Naive thymus-derived CD4-positive, alpha-beta T cell (primary cell): ENCODE measurements at regions of chr2 and their contacts with region 1.

Region 1: DNA sequence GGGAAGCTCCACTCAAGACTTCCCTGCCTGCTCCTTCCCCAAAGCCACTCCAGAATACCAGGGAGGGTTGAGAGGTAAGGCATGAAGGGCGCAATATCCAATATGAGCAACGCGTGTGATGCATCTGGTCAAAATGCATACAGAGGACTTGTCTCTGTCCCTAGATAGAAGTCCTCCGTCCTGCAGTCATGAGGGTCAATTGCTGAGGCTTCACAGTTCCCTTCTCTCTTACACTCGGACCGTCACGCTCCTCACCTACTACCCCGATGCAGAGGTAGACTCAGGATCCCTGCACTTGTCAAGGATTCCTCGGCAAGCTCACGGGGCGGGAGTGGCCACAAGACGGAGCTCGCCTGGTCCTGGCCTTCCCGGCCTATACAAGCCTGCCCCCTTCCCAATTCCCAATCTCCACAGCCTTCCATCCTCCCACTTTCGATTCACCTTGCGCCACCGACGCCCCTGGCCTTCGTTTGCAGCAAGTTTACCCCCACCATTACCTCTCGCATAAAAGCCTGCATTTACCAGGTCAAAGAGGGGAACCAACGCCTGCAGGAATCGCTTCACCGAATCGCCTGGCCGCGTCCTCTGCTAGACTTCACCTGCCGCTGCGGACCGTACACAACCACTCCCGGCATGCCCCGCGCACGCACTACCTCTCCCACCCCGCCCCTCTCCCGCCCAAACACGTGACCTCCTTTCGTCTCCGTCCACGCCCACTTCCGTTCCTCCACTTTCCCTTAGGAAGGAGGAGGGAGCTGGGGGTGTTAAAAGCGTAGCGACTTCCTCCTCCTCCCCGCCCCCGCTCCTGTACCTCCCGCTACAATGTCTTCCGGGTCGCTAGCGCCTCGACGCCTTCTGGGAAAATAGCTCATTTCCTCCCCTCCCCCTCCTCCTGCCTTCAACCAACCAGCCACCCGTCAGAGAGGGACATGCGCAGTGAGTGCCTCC is at the start of gene ORC4:
- DNase-seq: peak; percentile 70 to 98 (median 97)
- ATAC-seq: peak; percentile 94
- H3K4me3 ChIP-seq: peak within 1 kb of the TSS; percentile 89
- H3K4me3 Mint-ChIP-seq: peak within 1 kb of the TSS; percentile 92 to 100 (median 98)
- H3K27ac ChIP-seq: peak within 1 kb of the TSS; percentile 91
- H3K27ac Mint-ChIP-seq: peak within 1 kb of the TSS; percentile 89 to 99 (median 97)
- H3K4me1 ChIP-seq: peaks cover 20 to 36% of the 10 kb centered on the region in 2 donors
- H3K4me1 Mint-ChIP-seq: peaks cover 27 to 84% (median 70%) of the 10 kb centered on the region in 7 donors
- H3K27me3 ChIP-seq: no peaks in the 10 kb centered on the region
- H3K27me3 Mint-ChIP-seq: no peaks in the 10 kb centered on the region
- total RNA-seq, gene ORC4: 34.1 to 63.7 (median 44.8) TPM

Region 2: DNA sequence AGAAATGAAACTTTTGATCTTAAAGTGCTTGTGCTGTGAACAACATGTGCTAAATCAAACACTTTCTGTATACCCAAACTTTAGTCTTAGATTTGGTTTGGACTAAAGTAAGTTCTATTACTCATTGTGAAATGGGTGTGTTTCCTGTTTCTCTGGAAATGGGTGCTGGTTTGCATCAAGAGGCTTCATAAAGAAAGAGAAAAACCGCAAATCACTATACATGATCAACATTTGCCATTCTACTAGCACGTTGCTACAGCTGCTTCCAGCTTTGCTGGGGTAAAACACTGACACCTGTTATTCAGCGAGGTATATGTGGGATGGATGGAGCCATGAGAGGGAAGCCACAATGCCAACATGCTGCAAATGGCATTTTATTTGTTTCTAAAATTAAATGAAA is 722.6 kb before region 1 on chr2:
- CTCF ChIA-PET with region 1: no interaction called
- POLR2A ChIA-PET with region 1: no interaction called
- intact Hi-C with region 1: loop called (anchors 2 to 10 kb)
- DNase-seq: peak in 7 of 9 donors; percentile 13 to 63 (median 32)
- ATAC-seq: peak; percentile 76
- H3K4me3 ChIP-seq: no peak overlapping the region
- H3K4me3 Mint-ChIP-seq: peak overlapping the region in 8 of 10 donors; percentile 9 to 53 (median 38)
- H3K27ac ChIP-seq: no peak overlapping the region
- H3K27ac Mint-ChIP-seq: peak overlapping the region; percentile 53 to 94 (median 85)
- H3K4me1 ChIP-seq: peaks cover 18 to 26% of the 10 kb centered on the region in 2 donors
- H3K4me1 Mint-ChIP-seq: peaks cover 10 to 60% (median 29%) of the 10 kb centered on the region in 7 donors
- H3K27me3 ChIP-seq: no peaks in the 10 kb centered on the region
- H3K27me3 Mint-ChIP-seq: peaks cover 0 to 17% (median 0%) of the 10 kb centered on the region in 5 donors

Region 3: GRCh38 chr2:147925886-147926285 is 94.5 kb before region 1 on chr2:
- CTCF ChIA-PET with region 1: no interaction called
- POLR2A ChIA-PET with region 1: no interaction called
- intact Hi-C with region 1: no loop called
- DNase-seq: peak in 2 of 9 donors; percentile 5 to 7
- ATAC-seq: no peak
- H3K4me3 ChIP-seq: no peak overlapping the region
- H3K4me3 Mint-ChIP-seq: peak overlapping the region in 1 of 10 donors; percentile 19
- H3K27ac ChIP-seq: no peak overlapping the region
- H3K27ac Mint-ChIP-seq: peak overlapping the region in 7 of 9 donors; percentile 26 to 78 (median 66)
- H3K4me1 ChIP-seq: no peaks in the 10 kb centered on the region
- H3K4me1 Mint-ChIP-seq: peaks cover 0 to 36% (median 25%) of the 10 kb centered on the region in 7 donors
- H3K27me3 ChIP-seq: no peaks in the 10 kb centered on the region
- H3K27me3 Mint-ChIP-seq: no peaks in the 10 kb centered on the region

Region 4: GRCh38 chr2:148042219-148042618 is 21.8 kb after region 1 on chr2:
- CTCF ChIA-PET with region 1: interaction called, 6 read pairs
- POLR2A ChIA-PET with region 1: interaction called, 3 read pairs
- intact Hi-C with region 1: loop called in 1 of 2 experiments (anchors 2 kb)
- DNase-seq: no peak
- ATAC-seq: no peak
- H3K4me3 ChIP-seq: no peak overlapping the region
- H3K4me3 Mint-ChIP-seq: no peak overlapping the region
- H3K27ac ChIP-seq: no peak overlapping the region
- H3K27ac Mint-ChIP-seq: no peak overlapping the region
- H3K4me1 ChIP-seq: peaks cover 0 to 4% of the 10 kb centered on the region in 2 donors
- H3K4me1 Mint-ChIP-seq: peaks cover 10 to 36% (median 20%) of the 10 kb centered on the region in 7 donors
- H3K27me3 ChIP-seq: no peaks in the 10 kb centered on the region
- H3K27me3 Mint-ChIP-seq: no peaks in the 10 kb centered on the region

Region 5: DNA sequence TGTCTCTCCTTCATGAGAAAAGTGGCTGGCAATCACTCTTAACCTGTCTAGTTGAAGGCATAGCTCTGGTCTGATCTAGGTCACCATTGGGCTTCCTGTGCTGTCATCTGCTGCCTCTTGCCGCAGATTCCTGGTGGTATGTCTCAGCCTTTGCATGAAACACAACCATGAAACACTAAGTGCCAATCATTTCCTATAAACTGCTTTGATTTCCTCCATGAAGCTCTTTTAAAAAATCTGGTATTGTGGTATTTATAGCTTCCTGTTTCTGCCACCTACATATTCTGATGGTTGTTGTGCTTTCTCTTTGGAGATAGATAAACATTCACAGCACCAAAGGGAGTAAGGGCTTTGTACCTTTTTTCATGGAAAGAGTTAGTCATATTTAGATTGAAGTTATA is 504.1 kb after region 1 on chr2:
- CTCF ChIA-PET with region 1: interaction called, 3 read pairs
- POLR2A ChIA-PET with region 1: interaction called, 9 read pairs
- intact Hi-C with region 1: loop called (anchors 1 kb)
- DNase-seq: peak in 8 of 9 donors; percentile 44 to 93 (median 86)
- ATAC-seq: peak; percentile 94
- H3K4me3 ChIP-seq: peak overlapping the region; percentile 28
- H3K4me3 Mint-ChIP-seq: peak overlapping the region; percentile 56 to 92 (median 76)
- H3K27ac ChIP-seq: peak overlapping the region; percentile 56
- H3K27ac Mint-ChIP-seq: peak overlapping the region; percentile 85 to 98 (median 94)
- H3K4me1 ChIP-seq: peaks cover 46 to 75% of the 10 kb centered on the region in 2 donors
- H3K4me1 Mint-ChIP-seq: peaks cover 58 to 90% (median 88%) of the 10 kb centered on the region in 7 donors
- H3K27me3 ChIP-seq: no peaks in the 10 kb centered on the region
- H3K27me3 Mint-ChIP-seq: no peaks in the 10 kb centered on the region

Region 6: GRCh38 chr2:148730085-148730484 is 709.7 kb after region 1 on chr2:
- CTCF ChIA-PET with region 1: no interaction called
- POLR2A ChIA-PET with region 1: no interaction called
- intact Hi-C with region 1: no loop called
- DNase-seq: no peak
- ATAC-seq: no peak
- H3K4me3 ChIP-seq: no peak overlapping the region
- H3K4me3 Mint-ChIP-seq: peak overlapping the region in 1 of 10 donors; percentile 10
- H3K27ac ChIP-seq: no peak overlapping the region
- H3K27ac Mint-ChIP-seq: peak overlapping the region in 2 of 9 donors; percentile 11 to 25
- H3K4me1 ChIP-seq: peaks cover 0 to 4% of the 10 kb centered on the region in 2 donors
- H3K4me1 Mint-ChIP-seq: peaks cover 18 to 79% (median 54%) of the 10 kb centered on the region in 7 donors
- H3K27me3 ChIP-seq: no peaks in the 10 kb centered on the region
- H3K27me3 Mint-ChIP-seq: no peaks in the 10 kb centered on the region

Region 7: DNA sequence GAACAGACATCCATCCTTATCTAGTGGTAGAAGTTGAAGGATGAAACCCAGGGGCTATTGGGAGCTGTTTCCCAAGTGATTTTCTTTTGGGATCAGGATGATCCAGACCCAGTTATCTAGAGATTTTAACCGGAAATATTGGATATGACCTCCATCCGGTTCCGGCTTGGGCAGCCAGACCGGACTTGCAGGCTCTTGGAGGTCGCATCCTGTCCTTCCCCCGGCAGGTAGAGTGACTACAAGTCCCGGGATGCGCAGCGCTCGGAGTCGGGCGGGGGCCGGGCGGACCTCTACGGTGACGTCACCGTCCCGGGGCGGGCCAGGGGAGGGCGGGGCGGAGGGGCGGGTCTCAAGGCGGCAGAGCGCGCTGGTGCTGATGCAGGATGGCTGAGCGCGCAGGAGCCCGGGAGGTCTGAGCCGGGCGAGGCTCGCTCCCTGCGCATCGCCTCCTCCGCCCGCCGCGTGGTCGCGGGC is 854.5 kb after region 1 on chr2 and contains the start of gene KIF5C:
- CTCF ChIA-PET with region 1: no interaction called
- POLR2A ChIA-PET with region 1: interaction called, 3 read pairs
- intact Hi-C with region 1: loop called (anchors 1 kb)
- DNase-seq: peak; percentile 67 to 83 (median 76)
- ATAC-seq: peak; percentile 95
- H3K4me3 ChIP-seq: peak within 1 kb of the TSS; percentile 45
- H3K4me3 Mint-ChIP-seq: peak within 1 kb of the TSS; percentile 77 to 89 (median 86)
- H3K27ac ChIP-seq: no peak within 1 kb of the TSS
- H3K27ac Mint-ChIP-seq: peak within 1 kb of the TSS in 6 of 9 donors; percentile 4 to 82 (median 72)
- H3K4me1 ChIP-seq: peaks cover 5 to 6% of the 10 kb centered on the region in 2 donors
- H3K4me1 Mint-ChIP-seq: peaks cover 0 to 19% (median 14%) of the 10 kb centered on the region in 7 donors
- H3K27me3 ChIP-seq: no peaks in the 10 kb centered on the region
- H3K27me3 Mint-ChIP-seq: peaks cover 8 to 33% (median 28%) of the 10 kb centered on the region in 5 donors
- total RNA-seq, gene KIF5C: 3.6 to 14.3 (median 6.8) TPM

Region 8: DNA sequence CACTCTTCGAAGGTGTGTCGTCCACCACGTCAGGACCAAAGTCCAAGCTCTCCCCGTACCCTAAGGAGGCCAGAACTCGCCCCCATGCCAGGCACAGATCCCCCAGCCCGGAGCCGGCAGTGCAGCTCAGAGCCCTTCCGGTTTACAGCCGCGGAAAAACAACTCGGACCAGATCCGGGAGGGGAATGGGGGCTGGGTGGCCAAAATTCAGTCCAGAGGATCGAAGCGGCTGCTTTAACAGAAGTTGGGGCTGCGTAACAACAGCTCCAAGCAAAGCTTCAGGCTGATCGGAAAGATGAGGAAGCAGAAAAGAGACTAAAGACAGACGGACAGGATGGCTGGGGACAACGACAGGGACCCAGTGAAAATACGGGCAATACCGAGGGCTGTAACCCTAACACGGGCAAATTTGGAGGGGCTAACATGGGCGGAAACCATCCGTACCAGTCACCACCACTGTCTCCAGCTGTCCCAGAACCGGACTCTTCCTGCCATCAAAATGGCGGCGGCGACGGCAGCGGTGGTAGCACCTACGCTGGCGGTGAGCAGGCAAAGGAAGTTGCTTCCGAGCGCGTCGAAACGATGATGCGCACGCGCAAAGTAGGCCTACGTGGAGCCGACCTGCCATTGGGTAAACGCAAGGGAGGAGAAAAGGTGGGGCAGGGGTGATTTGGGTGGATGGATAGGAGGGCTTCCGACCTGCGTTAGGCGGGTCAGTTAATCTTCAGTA is 1567.0 kb after region 1 on chr2 and contains the start of gene MMADHC:
- CTCF ChIA-PET with region 1: no interaction called
- POLR2A ChIA-PET with region 1: no interaction called
- intact Hi-C with region 1: loop called (anchors 1 kb)
- DNase-seq: peak; percentile 83 to 93 (median 91)
- ATAC-seq: peak; percentile 98
- H3K4me3 ChIP-seq: peak within 1 kb of the TSS; percentile 97
- H3K4me3 Mint-ChIP-seq: peak within 1 kb of the TSS; percentile 95 to 99 (median 97)
- H3K27ac ChIP-seq: peak within 1 kb of the TSS; percentile 93
- H3K27ac Mint-ChIP-seq: peak within 1 kb of the TSS; percentile 95 to 100 (median 99)
- H3K4me1 ChIP-seq: peaks cover 23 to 39% of the 10 kb centered on the region in 2 donors
- H3K4me1 Mint-ChIP-seq: peaks cover 27 to 58% (median 50%) of the 10 kb centered on the region in 7 donors
- H3K27me3 ChIP-seq: no peaks in the 10 kb centered on the region
- H3K27me3 Mint-ChIP-seq: peaks cover 22 to 30% (median 30%) of the 10 kb centered on the region in 5 donors
- total RNA-seq, gene MMADHC: 53.3 to 93.4 (median 66.6) TPM